ENCODE measurements at regions of chr9 and their contacts with region 1.

Region 1: DNA sequence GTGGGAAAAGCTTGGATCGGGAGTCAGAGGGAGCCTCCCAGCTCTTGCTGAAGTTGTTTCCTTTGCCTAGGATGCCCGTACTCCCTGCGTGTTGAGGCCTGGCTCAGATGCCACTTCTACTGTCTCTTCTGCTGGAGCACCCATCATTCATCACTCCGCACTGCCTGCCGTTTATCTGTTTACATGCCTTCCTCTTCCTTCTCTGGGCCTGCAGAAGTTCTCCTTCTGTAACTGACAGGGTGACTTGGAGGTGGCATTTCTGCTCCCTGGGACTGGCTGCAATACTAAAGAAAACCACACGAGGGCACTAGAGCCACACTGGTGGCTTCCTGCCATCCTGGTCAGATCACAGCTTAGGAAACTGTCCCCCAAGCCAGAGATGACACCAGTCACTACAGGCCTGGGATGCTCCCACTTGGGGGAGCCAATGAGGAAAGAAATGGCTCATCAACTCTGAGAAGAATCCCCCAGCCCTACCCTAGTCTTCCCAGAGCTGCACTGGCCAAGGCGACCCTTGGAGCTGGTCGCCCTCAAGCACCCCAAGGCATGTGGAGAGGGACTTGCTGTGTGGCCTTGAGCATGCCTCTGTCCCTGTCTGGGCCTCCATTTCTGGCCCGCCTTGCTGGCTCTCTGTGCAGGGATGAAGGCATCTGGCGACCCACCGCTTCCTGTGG is 9.7 kb upstream of the SLC25A51 start:
- DNase-seq: peak; percentile 91 to 95 (median 93)
- ATAC-seq: peak; percentile 95
- H3K4me3 ChIP-seq: no peak overlapping the region
- H3K27ac ChIP-seq: no peak overlapping the region
- H3K4me1 ChIP-seq: peaks cover 0 to 10% of the 10 kb centered on the region in 2 experiments; a peak in 3 of 5 replicates
- H3K27me3 ChIP-seq: no peaks in the 10 kb centered on the region
- CTCF ChIP-seq: peak; percentile 98 to 100 (median 99)
- EP300 ChIP-seq: no peak
- POLR2A ChIP-seq: no peak
- RAD21 ChIP-seq: peak; percentile 100

Region 2: DNA sequence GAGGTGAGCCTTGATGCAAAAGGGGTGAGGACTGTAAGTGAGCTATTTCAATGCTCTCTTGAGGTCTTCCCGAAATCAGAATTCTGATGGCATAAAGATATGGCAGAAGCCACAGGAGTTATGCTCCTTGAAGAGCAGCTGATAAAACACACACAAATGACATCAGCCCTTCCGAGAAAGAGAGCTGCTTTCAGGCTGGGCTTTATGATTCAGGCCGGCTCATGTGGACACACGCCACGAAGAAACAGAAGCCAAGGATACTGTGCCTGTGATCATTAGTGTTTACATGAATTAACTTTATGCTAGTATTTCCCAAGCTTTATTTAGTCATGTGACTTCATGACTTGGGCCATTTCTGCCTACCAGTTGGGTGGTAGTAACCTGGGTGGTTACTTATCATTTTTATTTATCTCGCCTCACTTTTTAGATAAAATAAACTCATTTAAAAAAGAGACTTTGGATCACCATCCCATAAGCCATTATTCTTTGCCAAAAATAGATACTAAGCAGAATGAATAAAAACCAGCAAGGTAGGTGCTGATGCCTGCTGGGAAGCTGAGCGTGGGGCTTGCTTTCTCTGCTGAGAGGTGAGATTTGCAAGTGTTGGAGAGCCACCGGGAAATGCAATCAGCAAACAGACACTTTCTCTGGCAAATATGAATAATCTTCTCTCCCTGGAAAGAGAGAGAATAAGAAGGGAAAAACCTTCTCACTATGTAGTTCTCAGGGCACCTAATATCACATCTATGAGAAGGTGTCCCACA is 63.3 kb after region 1 on chr9:
- CTCF ChIA-PET with region 1: no interaction called
- POLR2A ChIA-PET with region 1: no interaction called
- in situ Hi-C with region 1: no loop called
- intact Hi-C with region 1: no loop called
- DNase-seq: peak in 1 of 4 experiments; percentile 72
- ATAC-seq: peak; percentile 81
- H3K4me3 ChIP-seq: no peak overlapping the region
- H3K27ac ChIP-seq: no peak overlapping the region
- H3K4me1 ChIP-seq: peaks cover 0 to 19% of the 10 kb centered on the region in 2 experiments; a peak in 4 of 5 replicates
- H3K27me3 ChIP-seq: no peaks in the 10 kb centered on the region
- CTCF ChIP-seq: no peak
- EP300 ChIP-seq: no peak
- POLR2A ChIP-seq: no peak
- RAD21 ChIP-seq: no peak

Region 3: DNA sequence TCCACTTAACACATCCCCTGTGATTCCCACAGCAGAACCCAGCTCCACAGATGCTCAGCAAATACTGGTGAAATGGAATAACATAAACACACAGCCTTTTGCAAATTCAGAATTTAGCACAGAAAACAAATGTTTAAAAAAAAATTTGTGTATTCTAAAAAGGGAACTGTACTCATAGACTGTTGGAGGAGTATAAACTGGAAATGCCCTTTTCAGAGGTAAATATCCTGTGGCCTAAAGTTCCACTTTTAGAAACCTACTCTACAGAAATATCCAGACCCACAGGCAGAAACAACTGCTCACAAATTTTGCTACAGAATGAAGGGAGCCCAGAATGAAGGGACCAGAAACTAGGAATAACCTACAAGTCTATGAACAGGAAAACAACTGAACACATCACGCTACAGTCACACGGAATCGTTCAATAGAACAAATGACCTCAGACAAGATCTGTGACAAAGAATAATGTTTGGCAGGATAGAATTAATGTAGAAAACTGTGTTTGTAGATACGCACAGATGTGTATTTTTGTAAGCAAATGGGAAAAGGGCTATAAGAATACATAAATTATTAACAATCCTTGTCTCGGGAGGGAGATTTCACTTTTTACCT is 76.9 kb after region 1 on chr9:
- CTCF ChIA-PET with region 1: no interaction called
- POLR2A ChIA-PET with region 1: no interaction called
- in situ Hi-C with region 1: no loop called
- intact Hi-C with region 1: no loop called
- DNase-seq: no peak
- ATAC-seq: no peak
- H3K4me3 ChIP-seq: no peak overlapping the region
- H3K27ac ChIP-seq: no peak overlapping the region
- H3K4me1 ChIP-seq: peaks cover 33 to 34% of the 10 kb centered on the region in 2 experiments
- H3K27me3 ChIP-seq: no peaks in the 10 kb centered on the region
- CTCF ChIP-seq: no peak
- EP300 ChIP-seq: no peak
- POLR2A ChIP-seq: no peak
- RAD21 ChIP-seq: no peak

Region 4: DNA sequence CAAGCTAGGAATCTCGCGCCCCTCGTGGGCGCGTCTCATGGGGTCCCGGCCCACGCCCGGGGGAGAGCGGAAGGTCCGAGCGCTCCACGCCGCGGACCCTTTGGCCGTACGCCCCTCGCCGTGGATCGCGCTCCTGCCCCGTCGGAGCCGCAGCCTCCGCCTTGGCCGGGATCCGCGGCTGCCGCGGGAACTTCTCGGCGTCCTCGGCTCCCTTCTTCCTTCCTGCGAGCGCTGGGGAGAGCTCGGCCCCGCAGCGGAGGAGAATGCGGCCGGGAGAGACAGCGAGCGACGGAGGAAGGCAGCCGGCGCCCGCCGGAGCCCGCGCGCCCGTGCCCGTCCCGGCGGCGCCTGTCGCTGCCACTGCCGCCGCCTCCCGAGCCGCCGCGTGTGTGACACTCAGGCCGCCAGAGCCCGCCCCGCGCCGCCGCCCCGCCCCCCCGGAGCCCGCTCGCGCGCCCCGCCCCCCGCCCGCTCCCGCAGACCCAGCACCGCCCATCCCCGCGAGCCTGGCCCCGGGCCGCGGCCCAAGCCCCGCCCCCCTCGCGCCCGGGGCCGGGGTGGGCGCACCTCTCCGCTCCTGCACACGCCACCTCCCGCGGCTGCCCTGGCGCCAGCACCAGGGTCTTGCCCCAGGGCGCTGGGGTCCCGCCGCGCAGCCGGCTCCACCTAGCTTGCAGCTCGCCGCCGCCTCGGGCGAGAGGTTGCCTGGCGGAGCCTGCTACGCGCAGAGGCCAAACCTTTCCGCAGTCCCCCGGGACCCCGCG is 155.4 kb after region 1 on chr9 and contains the start of gene SHB:
- CTCF ChIA-PET with region 1: interaction called, 19 read pairs
- POLR2A ChIA-PET with region 1: interaction called, 3 read pairs
- in situ Hi-C with region 1: loop called (anchors 5 kb)
- intact Hi-C with region 1: loop called (anchors 1 kb)
- DNase-seq: peak; percentile 89 to 99 (median 98)
- ATAC-seq: peak; percentile 77
- H3K4me3 ChIP-seq: peak within 1 kb of the TSS; percentile 90
- H3K27ac ChIP-seq: peak within 1 kb of the TSS; percentile 81
- H3K4me1 ChIP-seq: peaks cover 39 to 49% of the 10 kb centered on the region in 2 experiments
- H3K27me3 ChIP-seq: no peaks in the 10 kb centered on the region; a peak in 1 of 5 replicates
- CTCF ChIP-seq: peak in 1 of 3 experiments; percentile 53; a peak in 1 of 6 replicates
- EP300 ChIP-seq: no peak
- POLR2A ChIP-seq: peak; percentile 62; the same call in 1 of the 2 replicates
- RAD21 ChIP-seq: peak in 1 of 2 experiments; percentile 59; a peak in 1 of 4 replicates
- polyA plus RNA-seq, gene SHB: 0.78 to 1.0 TPM

Region 5: DNA sequence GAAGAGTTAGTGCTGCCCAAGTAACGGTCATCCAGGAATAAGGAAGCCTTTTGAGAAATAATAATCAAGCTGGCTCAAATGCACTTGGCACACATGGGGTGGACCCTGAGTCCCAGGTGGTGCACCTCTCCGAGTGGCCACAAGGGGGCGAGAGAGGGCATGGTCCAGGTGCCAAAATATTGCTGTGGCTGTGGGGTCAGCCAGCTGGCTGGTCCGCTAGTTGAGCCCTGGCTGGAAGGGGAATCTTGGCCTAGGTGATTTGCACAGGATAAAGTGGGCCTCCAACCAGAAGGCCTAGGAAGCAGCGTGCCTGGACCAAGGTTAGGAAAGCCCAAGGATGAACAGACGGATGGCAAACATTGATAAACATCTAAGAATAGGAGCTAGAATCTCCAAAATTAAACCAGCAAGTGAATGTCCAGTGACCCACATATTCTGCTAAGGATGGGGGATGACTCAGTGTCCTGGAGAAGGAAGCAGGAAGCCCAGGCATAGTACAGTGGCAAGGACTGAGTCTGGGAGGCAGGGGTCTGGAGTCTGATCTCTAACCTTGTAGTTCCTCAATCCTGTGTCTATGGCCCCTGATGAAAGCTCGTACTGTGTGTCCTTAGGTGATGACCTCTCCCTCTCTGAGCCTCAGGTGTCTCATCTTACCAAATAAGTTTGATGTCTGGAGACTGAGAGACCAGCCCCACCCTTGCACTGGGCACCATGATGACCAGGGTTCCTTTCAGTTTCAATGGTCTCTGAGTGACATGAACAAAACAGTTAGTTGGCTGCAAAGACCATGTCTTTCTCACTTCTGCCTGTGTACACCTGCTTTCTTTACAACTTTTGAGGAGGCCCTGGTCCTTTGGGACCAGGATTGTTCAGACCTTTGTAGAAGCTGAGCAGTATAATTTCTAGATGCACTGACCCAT is 174.6 kb after region 1 on chr9:
- CTCF ChIA-PET with region 1: interaction called, 11 read pairs
- POLR2A ChIA-PET with region 1: interaction called, 5 read pairs
- in situ Hi-C with region 1: no loop called
- intact Hi-C with region 1: loop called (anchors 5 kb)
- DNase-seq: peak; percentile 81 to 89 (median 86)
- ATAC-seq: peak; percentile 93
- H3K4me3 ChIP-seq: no peak overlapping the region
- H3K27ac ChIP-seq: no peak overlapping the region
- H3K4me1 ChIP-seq: no peaks in the 10 kb centered on the region
- H3K27me3 ChIP-seq: peaks cover 8 to 13% of the 10 kb centered on the region in 2 experiments; a peak in 4 of 5 replicates
- CTCF ChIP-seq: peak; percentile 94 to 99 (median 94)
- EP300 ChIP-seq: no peak
- POLR2A ChIP-seq: no peak
- RAD21 ChIP-seq: peak; percentile 76 to 92

Region 6: DNA sequence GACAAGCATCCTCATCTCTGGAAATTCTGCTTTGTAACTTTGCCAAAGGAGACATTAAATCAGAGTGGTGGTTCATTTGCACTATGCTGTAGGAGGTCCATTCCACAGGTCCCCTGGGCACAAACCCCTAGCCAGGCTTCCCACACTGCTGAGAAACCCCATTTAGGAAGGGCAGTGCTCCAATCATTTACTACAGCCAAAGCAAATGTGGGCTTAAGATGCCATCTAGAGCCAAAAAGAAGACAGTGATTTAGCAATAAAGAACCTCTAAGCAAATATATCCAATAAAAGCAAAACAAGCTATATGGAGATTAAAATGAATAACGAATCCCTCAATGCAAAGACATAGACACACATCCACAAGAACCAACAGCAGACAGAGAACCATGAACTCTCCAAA is 349.9 kb after region 1 on chr9:
- CTCF ChIA-PET with region 1: interaction called, 15 read pairs
- POLR2A ChIA-PET with region 1: no interaction called
- in situ Hi-C with region 1: no loop called
- intact Hi-C with region 1: loop called (anchors 1 kb)
- DNase-seq: no peak
- ATAC-seq: no peak
- H3K4me3 ChIP-seq: no peak overlapping the region
- H3K27ac ChIP-seq: no peak overlapping the region
- H3K4me1 ChIP-seq: no peaks in the 10 kb centered on the region
- H3K27me3 ChIP-seq: no peaks in the 10 kb centered on the region; a peak in 1 of 5 replicates
- CTCF ChIP-seq: peak; percentile 27 to 55 (median 35); a peak in 3 of 6 replicates
- EP300 ChIP-seq: no peak
- POLR2A ChIP-seq: no peak
- RAD21 ChIP-seq: peak; percentile 51 to 81

Region 7: GRCh38 chr9:38401994-38402393 is 488.4 kb after region 1 on chr9:
- CTCF ChIA-PET with region 1: interaction called, 10 read pairs
- POLR2A ChIA-PET with region 1: no interaction called
- in situ Hi-C with region 1: no loop called
- intact Hi-C with region 1: loop called (anchors 1 kb)
- DNase-seq: no peak
- ATAC-seq: no peak
- H3K4me3 ChIP-seq: no peak overlapping the region
- H3K27ac ChIP-seq: no peak overlapping the region
- H3K4me1 ChIP-seq: no peaks in the 10 kb centered on the region; a peak in 2 of 5 replicates
- H3K27me3 ChIP-seq: peaks cover 33 to 50% of the 10 kb centered on the region in 2 experiments
- CTCF ChIP-seq: no peak
- EP300 ChIP-seq: no peak
- POLR2A ChIP-seq: no peak
- RAD21 ChIP-seq: no peak